PC-9 (cell line): ENCODE measurements at regions of chr22 and their contacts with region 1.

Region 1: GRCh38 chr22:32042924-32043790 is at the start of gene SLC5A1:
- DNase-seq: peak; percentile 45 to 64
- H3K4me3 ChIP-seq: no peak within 1 kb of the TSS
- H3K27ac ChIP-seq: no peak within 1 kb of the TSS
- H3K4me1 ChIP-seq: no peaks in the 10 kb centered on the region
- H3K27me3 ChIP-seq: peaks cover 20% of the 10 kb centered on the region
- CTCF ChIP-seq: no peak
- total RNA-seq, gene SLC5A1: not detected in 2 replicates

Region 2: GRCh38 chr22:32364210-32364609 is 321.1 kb after region 1 on chr22:
- CTCF ChIA-PET with region 1: interaction called, 13 read pairs
- POLR2A ChIA-PET with region 1: no interaction called
- intact Hi-C with region 1: no loop called
- DNase-seq: no peak
- H3K4me3 ChIP-seq: no peak overlapping the region
- H3K27ac ChIP-seq: no peak overlapping the region
- H3K4me1 ChIP-seq: no peaks in the 10 kb centered on the region
- H3K27me3 ChIP-seq: peaks cover 89% of the 10 kb centered on the region
- CTCF ChIP-seq: no peak